ENCODE measurements at regions of chr1 and their contacts with region 1.

Region 1: DNA sequence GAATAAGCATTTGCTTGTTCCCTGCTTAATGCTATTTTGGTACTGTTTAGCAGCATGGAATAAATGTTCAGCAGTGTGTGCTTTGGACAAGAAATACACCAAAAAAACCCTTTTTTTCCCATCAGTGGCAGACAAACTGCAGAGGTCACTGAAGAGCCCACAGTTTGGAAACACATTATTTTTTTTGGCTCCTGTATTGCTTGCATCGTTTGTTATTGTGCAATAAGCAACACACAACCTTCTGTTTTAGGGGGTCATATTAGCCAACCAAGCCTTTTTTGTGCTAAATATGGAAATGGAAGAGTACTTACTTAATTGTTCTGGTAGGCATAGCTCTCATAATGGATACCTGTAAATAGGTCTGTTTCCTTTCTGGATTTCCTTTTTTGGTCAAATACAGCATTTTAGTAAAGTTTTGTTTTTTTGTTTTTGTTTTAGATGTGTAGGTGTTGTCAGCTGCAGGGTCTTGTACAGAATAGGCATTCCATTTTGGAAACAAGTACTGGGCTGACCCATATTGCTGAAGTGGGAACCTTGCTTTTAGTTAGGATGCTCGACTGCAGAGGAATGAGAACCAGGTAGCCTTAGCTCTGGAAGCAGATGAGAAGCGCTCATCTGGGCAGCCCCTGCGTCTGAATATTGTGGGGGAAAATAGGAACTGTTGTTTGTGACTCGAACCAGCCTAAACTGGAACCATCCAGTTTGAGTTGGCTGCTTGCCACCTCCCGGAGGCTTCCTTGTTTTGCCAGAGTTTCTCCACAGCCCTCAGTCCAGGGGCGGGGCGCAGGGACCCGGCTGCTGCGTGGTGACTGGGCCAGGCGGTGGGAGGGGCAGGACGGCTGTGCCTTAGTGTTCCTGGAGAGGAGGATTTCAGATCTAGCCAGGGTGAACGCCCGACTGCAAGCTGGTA is 38.4 kb downstream of the SPEN start:
- DNase-seq: peak; percentile 97
- H3K4me3 ChIP-seq: peak overlapping the region; percentile 16 to 44 (median 26)
- H3K27ac ChIP-seq: peak overlapping the region; percentile 88 to 94 (median 88)
- H3K4me1 ChIP-seq: peaks cover 13 to 47% (median 31%) of the 10 kb centered on the region in 4 donors
- H3K27me3 ChIP-seq: no peaks in the 10 kb centered on the region
- CTCF ChIP-seq: peak in 1 of 5 experiments; percentile 9
- EP300 ChIP-seq: peak; percentile 50
- POLR2A ChIP-seq: no peak

Region 2: GRCh38 chr1:15949453-15950245 is 63.7 kb after region 1 on chr1:
- in situ Hi-C with region 1: no loop called
- intact Hi-C with region 1: loop called (anchors 10 kb)
- DNase-seq: peak; percentile 88
- H3K4me3 ChIP-seq: peak overlapping the region in 2 of 4 donors; percentile 12 to 15
- H3K27ac ChIP-seq: peak overlapping the region; percentile 83 to 90 (median 90)
- H3K4me1 ChIP-seq: peaks cover 25 to 48% (median 36%) of the 10 kb centered on the region in 4 donors
- H3K27me3 ChIP-seq: no peaks in the 10 kb centered on the region
- CTCF ChIP-seq: no peak
- EP300 ChIP-seq: no peak
- POLR2A ChIP-seq: no peak

Region 3: GRCh38 chr1:16017461-16018303 is 131.7 kb after region 1 on chr1 and contains the start of gene HSPB7:
- in situ Hi-C with region 1: no loop called
- intact Hi-C with region 1: no loop called
- DNase-seq: peak; percentile 69
- H3K4me3 ChIP-seq: peak within 1 kb of the TSS; percentile 2 to 32 (median 20)
- H3K27ac ChIP-seq: peak within 1 kb of the TSS; percentile 83 to 92 (median 87)
- H3K4me1 ChIP-seq: peaks cover 28 to 44% (median 44%) of the 10 kb centered on the region in 4 donors
- H3K27me3 ChIP-seq: no peaks in the 10 kb centered on the region
- CTCF ChIP-seq: no peak
- EP300 ChIP-seq: peak; percentile 21
- POLR2A ChIP-seq: peak; percentile 59
- total RNA-seq, gene HSPB7: 6.0 to 63.1 (median 9.2) TPM